Activated CD4-positive, alpha-beta T cell treated with anti-CD3 and anti-CD28 coated beads for 36 hours (primary cell): ENCODE measurements at regions of chr1 and their contacts with region 1.

Region 1: DNA sequence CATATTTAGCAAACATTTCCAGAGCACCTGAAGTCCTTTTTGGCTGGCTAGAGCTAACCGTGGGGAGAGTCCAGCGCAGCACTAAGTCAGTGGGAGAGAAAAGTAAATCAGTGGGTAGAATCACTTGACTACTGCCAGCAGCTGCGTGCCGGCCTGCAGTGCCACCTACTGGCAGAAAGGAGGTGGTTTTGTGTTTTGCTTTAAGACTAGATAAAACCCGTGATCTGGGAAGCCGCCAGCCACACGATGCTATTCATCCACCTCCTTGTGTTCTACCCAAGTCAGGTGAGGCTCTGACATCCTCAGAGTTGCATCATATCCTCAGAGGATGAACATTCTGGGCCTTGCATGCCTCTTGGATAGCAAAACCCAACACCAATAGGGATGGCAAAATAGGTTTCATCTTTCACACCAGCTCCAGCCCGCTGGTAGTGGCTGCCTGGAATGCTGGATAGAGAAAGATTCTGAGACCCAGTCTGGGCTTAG is 14.1 kb upstream of the HEYL start:
- DNase-seq: peak; percentile 89
- ATAC-seq: peak; percentile 82
- H3K4me3 Mint-ChIP-seq: no peak overlapping the region
- H3K27ac Mint-ChIP-seq: peak overlapping the region; percentile 26
- H3K4me1 Mint-ChIP-seq: peaks cover 8% of the 10 kb centered on the region
- H3K27me3 Mint-ChIP-seq: peaks cover 3% of the 10 kb centered on the region

Region 2: DNA sequence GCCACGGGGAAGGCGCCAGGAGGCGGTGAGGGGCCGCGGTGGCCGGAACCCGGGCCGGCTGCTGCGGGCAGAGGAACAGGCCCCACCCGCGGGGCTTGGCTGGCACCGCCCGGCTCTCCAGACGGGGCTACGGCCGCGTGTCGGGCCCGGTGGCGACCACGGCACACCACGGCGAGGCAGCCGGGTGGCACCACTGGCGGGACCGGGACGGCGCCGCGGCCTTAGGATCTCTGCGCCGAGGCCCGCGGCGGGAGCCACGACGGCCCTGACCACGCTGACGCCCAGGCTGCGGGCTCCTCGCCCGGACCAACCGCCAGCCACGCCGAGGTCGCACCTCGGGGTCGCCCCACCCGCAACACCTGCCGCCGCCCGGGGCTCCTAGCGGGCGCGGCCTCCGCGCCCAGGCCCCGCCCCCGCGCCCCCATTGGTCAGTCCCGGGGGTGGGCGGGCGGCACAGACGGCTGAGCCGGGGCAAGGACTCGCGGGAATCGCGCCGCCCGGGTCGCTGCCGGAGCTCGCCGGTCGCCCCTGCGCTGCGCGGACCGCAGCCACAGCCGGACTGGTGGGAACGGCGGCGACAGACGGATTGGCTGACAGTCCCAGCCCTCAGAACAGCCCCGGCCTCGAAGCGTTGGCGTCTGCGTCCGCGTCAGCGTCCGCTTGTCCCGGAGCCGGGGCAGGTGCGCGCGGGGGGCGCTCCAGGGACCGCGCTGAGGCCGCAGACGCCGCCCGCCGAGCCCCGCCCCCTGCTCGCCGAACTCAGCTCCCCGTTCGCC is 162.3 kb before region 1 on chr1 and contains the start of gene BMP8A:
- CTCF ChIA-PET with region 1: no interaction called
- POLR2A ChIA-PET with region 1: no interaction called
- intact Hi-C with region 1: loop called in 1 of 2 experiments (anchors 10 kb)
- DNase-seq: peak; percentile 83
- ATAC-seq: peak; percentile 92
- H3K4me3 Mint-ChIP-seq: peak within 1 kb of the TSS; percentile 43
- H3K27ac Mint-ChIP-seq: no peak within 1 kb of the TSS
- H3K4me1 Mint-ChIP-seq: peaks cover 4% of the 10 kb centered on the region
- H3K27me3 Mint-ChIP-seq: peaks cover 16% of the 10 kb centered on the region
- total RNA-seq, gene BMP8A: 0.16 TPM in 1 of 2 experiments, not detected in the other

Region 3: DNA sequence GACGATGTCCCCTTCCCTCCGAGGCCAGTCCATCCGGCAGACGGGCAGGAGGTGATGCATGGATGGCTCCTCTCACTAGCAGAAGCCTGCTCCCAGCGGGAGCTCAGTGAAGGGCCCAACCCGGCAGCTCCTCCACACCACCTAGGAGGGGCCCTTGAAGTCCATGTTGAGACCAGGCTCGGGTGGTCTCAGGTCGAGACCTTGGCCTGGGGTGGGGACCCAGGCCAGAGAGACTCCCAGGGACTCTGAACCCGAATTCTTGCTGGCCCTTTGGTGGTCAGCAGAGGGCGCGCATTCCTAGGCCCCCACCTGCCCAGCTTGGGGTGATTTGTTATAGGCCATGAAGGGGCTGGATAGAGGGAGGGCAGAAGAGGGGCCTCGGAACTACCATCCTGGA is 19.0 kb after region 1 on chr1:
- CTCF ChIA-PET with region 1: interaction called, 177 read pairs
- POLR2A ChIA-PET with region 1: interaction called, 3 read pairs
- intact Hi-C with region 1: no loop called
- DNase-seq: peak; percentile 59
- ATAC-seq: peak; percentile 39
- H3K4me3 Mint-ChIP-seq: peak overlapping the region; percentile 31
- H3K27ac Mint-ChIP-seq: no peak overlapping the region
- H3K4me1 Mint-ChIP-seq: peaks cover 7% of the 10 kb centered on the region
- H3K27me3 Mint-ChIP-seq: peaks cover 27% of the 10 kb centered on the region

Region 4: GRCh38 chr1:39680751-39681150 is 27.2 kb after region 1 on chr1:
- CTCF ChIA-PET with region 1: interaction called, 177 read pairs
- POLR2A ChIA-PET with region 1: interaction called, 3 read pairs
- intact Hi-C with region 1: no loop called
- DNase-seq: no peak
- ATAC-seq: no peak
- H3K4me3 Mint-ChIP-seq: no peak overlapping the region
- H3K27ac Mint-ChIP-seq: no peak overlapping the region
- H3K4me1 Mint-ChIP-seq: peaks cover 22% of the 10 kb centered on the region
- H3K27me3 Mint-ChIP-seq: peaks cover 18% of the 10 kb centered on the region

Region 5: DNA sequence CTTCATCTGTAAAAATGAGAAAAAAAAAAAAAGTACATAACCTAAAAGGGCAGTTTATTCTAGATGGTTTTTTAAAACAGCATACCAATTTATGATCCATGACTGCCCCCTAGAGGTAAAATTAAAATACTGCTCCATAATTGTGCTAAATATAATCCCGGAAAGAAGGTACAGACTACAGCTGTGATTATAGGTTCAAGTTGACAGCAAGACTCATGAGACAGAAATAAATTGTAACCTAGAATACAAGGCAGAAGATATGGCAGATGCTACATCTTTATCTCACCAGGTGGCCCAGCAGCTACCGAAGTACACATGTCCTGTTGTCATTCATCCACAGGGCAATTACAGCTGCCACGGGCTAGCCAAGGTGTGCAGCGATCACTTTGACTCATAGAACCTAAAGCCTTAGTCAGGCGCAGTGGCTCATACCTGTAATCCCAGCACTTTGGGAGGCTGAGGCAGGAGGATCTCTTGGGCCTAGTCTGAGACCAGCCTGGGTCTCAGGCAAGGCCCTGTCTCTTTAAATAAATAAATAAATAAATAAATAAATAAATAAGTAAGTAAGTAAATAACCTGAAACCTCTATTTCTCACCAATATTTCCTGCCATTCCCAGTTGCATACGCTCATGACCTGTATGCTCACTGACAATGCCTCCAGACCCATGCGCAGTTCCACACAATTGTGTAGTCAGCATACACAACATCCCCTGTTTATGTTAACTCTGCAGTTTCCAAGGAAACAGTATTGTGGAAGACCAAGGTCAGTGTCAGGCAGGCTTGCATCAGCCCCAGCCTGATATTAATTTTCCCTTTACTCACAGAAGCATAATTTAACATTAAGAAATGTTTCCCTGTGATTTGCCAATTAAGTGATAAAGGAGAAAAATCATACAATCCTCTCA is 66.8 kb after region 1 on chr1:
- CTCF ChIA-PET with region 1: interaction called, 11 read pairs
- POLR2A ChIA-PET with region 1: no interaction called
- intact Hi-C with region 1: loop called in 1 of 2 experiments (anchors 1 kb)
- DNase-seq: no peak
- ATAC-seq: peak; percentile 73
- H3K4me3 Mint-ChIP-seq: no peak overlapping the region
- H3K27ac Mint-ChIP-seq: no peak overlapping the region
- H3K4me1 Mint-ChIP-seq: no peaks in the 10 kb centered on the region
- H3K27me3 Mint-ChIP-seq: peaks cover 38% of the 10 kb centered on the region